CD8-positive, alpha-beta T cell (primary cell): ENCODE measurements at regions of chr17 and their contacts with region 1.

Region 1: DNA sequence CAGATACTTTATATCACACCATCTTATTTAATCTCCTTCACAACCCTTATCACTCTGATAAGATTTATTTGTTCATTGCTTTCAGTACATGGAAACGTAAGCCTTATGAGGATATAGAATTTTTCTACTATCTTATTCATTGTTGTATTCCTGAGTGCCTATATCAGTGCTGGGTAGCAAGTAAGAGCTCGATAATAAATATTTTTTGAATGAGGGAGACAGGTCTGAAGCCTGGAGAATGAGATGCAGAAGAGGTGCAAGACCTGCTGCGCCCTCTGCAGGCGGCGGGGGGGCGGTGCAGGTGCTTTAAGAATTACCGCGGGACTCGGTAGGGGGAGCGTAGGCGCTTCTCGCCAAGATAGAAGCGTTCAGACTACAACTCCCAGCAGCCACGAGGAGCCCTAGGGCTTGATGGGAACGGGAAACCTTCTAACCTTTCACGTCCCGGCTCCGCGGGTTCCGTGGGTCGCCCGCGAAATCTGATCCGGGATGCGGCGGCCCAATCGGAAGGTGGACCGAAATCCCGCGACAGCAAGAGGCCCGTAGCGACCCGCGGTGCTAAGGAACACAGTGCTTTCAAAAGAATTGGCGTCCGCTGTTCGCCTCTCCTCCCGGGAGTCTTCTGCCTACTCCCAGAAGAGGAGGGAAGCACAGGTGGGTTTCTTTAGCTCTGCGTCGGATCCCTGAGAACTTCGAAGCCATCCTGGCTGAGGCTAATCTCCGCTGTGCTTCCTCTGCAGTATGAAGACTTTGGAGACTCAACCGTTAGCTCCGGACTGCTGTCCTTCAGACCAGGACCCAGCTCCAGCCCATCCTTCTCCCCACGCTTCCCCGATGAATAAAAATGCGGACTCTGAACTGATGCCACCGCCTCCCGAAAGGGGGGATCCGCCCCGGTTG is at the start of gene WRAP53:
- DNase-seq: peak; percentile 93 to 97 (median 95)
- ATAC-seq: peak; percentile 77
- H3K4me3 ChIP-seq: peak within 1 kb of the TSS; percentile 81 to 92
- H3K4me3 Mint-ChIP-seq: peak within 1 kb of the TSS; percentile 97
- H3K27ac ChIP-seq: peak within 1 kb of the TSS; percentile 98 to 100
- H3K27ac Mint-ChIP-seq: peak within 1 kb of the TSS; percentile 100
- H3K4me1 ChIP-seq: peaks cover 32% of the 10 kb centered on the region
- H3K4me1 Mint-ChIP-seq: peaks cover 37% of the 10 kb centered on the region
- H3K27me3 ChIP-seq: no peaks in the 10 kb centered on the region
- H3K27me3 Mint-ChIP-seq: no peaks in the 10 kb centered on the region
- CTCF ChIP-seq: peak; percentile 98
- total RNA-seq, gene WRAP53: 5.2 to 6.6 TPM

Region 2: DNA sequence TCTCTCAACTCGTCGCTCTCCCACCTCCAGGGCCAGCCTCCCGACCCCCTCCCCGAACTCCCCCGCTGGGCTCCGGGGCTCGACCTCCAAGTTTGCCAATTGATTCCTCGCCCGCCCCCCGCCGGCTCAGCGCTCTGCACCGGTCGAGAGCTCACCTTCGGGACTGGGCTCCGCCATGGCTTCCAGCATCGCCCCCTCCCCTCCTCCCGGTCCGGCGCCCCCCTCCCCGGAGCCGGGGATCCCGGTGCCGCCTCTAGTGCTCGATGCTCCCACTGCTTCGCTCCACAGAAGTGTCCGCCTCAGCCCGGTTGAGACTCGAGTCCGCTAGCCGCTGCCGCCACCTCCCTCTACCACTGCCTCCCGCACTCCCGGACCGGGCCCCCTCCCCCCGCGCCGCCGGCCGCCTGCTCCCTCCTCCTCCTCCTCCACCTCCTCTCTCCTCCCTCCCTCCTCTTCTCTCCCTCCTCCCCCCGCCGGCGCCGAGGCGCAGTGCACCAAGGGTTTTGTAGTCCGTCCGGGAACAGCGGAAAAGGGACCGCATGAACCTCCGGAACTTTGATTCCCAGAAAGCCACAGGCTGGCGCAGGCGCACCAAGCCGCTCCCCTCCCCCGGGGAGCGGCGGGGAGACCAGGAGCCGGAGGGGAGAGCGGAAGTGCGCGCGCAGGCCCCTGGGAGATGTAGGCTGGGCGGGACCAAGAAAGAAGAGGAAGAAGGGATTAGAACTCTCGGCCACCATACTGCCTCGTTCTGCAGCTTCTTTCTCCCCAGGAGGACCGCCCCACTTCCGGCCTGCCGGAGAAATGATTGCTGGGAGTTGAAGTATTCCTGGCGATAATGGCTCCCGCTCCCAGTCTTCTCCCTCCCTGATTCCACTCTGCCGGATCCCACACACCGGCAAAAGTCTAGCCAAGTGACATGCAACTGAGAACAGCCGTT is 448.8 kb before region 1 on chr17 and contains the start of gene PHF23:
- CTCF ChIA-PET with region 1: no interaction called
- POLR2A ChIA-PET with region 1: interaction called, 4 read pairs
- intact Hi-C with region 1: loop called in 1 of 2 experiments (anchors 5 kb)
- DNase-seq: peak; percentile 93 to 99 (median 97)
- ATAC-seq: peak; percentile 64
- H3K4me3 ChIP-seq: peak within 1 kb of the TSS; percentile 87 to 90
- H3K4me3 Mint-ChIP-seq: peak within 1 kb of the TSS; percentile 98
- H3K27ac ChIP-seq: peak within 1 kb of the TSS; percentile 64 to 100
- H3K27ac Mint-ChIP-seq: peak within 1 kb of the TSS; percentile 90
- H3K4me1 ChIP-seq: peaks cover 37% of the 10 kb centered on the region
- H3K4me1 Mint-ChIP-seq: peaks cover 58% of the 10 kb centered on the region
- H3K27me3 ChIP-seq: no peaks in the 10 kb centered on the region
- H3K27me3 Mint-ChIP-seq: no peaks in the 10 kb centered on the region
- CTCF ChIP-seq: no peak
- total RNA-seq, gene PHF23: 2.8 to 3.1 TPM

Region 3: DNA sequence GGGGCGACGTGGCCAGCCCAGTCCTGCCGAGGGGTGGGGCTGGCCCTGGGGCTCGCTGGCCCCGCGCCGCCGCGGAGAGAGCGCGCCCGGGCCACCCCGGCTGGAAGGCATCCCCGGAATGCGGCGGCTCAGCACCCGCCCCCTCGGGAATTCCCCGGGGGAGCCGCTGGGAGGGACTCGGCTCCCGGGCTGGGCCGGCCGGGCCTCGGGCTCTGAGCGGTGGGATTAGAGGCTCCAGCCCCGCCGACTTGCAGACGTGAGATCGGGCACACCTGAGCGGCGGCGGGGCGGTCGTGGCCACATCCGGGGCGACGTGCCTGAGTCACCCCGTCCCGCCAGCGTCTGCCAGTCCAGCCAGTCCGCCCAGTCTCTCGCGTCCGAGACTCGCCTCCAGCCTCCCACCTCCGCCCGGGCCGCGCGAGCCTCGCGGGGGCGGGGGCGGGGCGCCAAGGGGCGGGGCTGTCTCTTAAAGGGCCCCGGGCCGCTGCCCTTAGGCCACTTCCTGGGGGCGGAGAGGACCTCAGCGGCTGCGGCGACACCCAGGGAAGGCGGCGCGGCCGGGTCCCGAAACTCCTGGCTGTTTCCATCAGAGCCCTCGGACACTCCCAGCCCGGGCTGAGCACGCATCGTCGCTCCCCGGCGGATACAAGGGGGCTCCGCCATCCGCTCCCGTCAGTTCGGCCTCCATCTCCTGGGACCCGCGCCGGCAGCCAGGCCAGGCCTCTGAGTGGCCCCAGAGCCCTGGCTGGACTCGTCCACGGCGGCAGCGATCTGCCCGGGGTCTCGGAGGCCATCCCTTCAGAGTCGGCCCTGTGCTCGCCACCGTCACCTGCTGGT is 336.3 kb before region 1 on chr17 and contains the start of gene KCTD11:
- CTCF ChIA-PET with region 1: interaction called, 4 read pairs
- POLR2A ChIA-PET with region 1: interaction called, 3 read pairs
- intact Hi-C with region 1: loop called (anchors 10 kb)
- DNase-seq: peak in 8 of 9 experiments; percentile 64 to 90 (median 80)
- ATAC-seq: peak; percentile 48
- H3K4me3 ChIP-seq: peak within 1 kb of the TSS; percentile 62 to 73
- H3K4me3 Mint-ChIP-seq: peak within 1 kb of the TSS; percentile 87
- H3K27ac ChIP-seq: peak within 1 kb of the TSS; percentile 53 to 87
- H3K27ac Mint-ChIP-seq: peak within 1 kb of the TSS; percentile 88
- H3K4me1 ChIP-seq: peaks cover 42% of the 10 kb centered on the region
- H3K4me1 Mint-ChIP-seq: peaks cover 38% of the 10 kb centered on the region
- H3K27me3 ChIP-seq: no peaks in the 10 kb centered on the region
- H3K27me3 Mint-ChIP-seq: no peaks in the 10 kb centered on the region
- CTCF ChIP-seq: peak; percentile 20
- total RNA-seq, gene KCTD11: 1.4 to 1.8 TPM

Region 4: DNA sequence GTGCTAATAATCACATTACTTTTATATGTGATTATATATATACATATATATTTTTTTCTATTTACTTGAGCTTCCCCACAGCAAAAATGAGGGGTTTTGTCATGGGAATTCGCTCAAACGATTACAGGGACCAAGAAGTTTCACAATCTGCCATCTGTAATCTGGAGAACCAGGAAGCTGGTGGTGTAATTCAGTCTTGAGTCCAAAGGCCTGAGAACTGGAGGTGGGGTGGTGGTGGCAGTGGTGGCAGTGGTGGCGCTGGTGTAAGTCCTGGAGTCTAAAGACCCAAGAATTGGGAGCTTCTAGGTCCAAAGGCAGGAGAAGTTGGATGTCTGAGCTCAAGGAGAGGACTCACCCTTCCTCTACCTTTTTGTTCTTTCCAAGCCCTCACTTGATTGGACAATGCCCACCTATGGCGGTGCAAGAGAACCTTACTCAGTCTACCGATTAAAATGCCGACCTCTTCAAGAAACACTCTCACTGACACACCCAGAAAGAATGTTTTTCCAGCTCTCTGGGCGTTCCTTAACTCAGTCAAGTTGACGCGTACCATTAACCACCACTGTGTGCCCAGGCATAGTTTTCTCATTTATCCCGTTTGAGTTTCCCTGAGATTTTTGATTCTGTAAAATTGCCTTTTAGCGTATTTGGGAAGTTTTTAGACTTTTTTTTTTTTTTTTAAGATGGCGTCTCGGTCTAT is 172.1 kb before region 1 on chr17:
- CTCF ChIA-PET with region 1: interaction called, 18 read pairs
- POLR2A ChIA-PET with region 1: interaction called, 5 read pairs
- intact Hi-C with region 1: loop called (anchors 1 to 2 kb)
- DNase-seq: no peak
- ATAC-seq: no peak
- H3K4me3 ChIP-seq: no peak overlapping the region
- H3K4me3 Mint-ChIP-seq: no peak overlapping the region
- H3K27ac ChIP-seq: no peak overlapping the region
- H3K27ac Mint-ChIP-seq: no peak overlapping the region
- H3K4me1 ChIP-seq: no peaks in the 10 kb centered on the region
- H3K4me1 Mint-ChIP-seq: peaks cover 2% of the 10 kb centered on the region
- H3K27me3 ChIP-seq: no peaks in the 10 kb centered on the region
- H3K27me3 Mint-ChIP-seq: no peaks in the 10 kb centered on the region
- CTCF ChIP-seq: no peak

Region 5: DNA sequence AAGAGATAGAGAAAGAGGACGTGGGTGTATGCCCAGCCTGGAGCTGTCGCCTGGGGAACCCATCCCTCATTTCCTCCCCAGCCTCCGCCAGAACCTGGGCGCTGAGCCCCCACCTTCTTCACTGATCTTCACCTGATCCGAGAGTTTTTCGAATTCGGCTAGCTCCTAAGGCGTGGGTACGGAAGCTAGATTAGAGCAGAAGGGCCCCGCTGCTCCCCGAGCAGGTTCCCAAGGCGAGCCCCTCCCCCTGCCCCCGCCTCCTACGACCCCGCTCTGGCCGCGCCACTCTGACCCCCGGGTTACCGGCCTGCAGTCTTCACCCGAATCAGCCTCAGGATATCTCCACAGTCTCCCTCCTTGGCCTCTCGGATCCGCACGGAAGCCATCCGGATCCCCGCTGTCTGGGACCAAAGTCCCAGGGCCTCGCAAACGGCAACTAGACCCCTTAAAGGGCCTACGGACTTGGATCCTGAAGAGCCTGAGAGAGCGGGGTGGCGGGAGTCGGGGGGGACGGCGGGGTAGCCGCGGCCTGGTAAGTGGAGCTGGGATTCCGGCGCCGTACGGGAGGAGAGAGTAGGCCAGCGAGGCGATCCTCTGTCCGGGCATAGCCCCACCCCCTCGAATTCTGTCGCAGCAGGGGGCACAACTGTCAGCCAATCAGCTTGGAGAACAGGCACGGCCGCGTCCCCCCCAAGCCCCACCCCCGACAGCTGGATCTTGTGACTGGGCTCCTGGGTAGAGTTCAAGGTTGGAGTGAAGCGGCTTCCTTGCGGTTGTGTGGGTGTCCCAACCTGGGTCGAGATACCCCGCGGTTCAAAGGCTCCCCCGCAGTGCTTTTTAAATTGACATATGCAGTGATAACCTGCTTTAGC is 60.7 kb before region 1 on chr17 and contains the start of gene SAT2:
- CTCF ChIA-PET with region 1: interaction called, 32 read pairs
- POLR2A ChIA-PET with region 1: interaction called, 58 read pairs
- intact Hi-C with region 1: loop called (anchors 1 kb)
- DNase-seq: peak; percentile 76 to 94 (median 86)
- ATAC-seq: peak; percentile 95
- H3K4me3 ChIP-seq: peak within 1 kb of the TSS; percentile 78 to 85
- H3K4me3 Mint-ChIP-seq: peak within 1 kb of the TSS; percentile 93
- H3K27ac ChIP-seq: peak within 1 kb of the TSS; percentile 74 to 78
- H3K27ac Mint-ChIP-seq: peak within 1 kb of the TSS; percentile 94
- H3K4me1 ChIP-seq: peaks cover 7% of the 10 kb centered on the region
- H3K4me1 Mint-ChIP-seq: peaks cover 16% of the 10 kb centered on the region
- H3K27me3 ChIP-seq: no peaks in the 10 kb centered on the region
- H3K27me3 Mint-ChIP-seq: no peaks in the 10 kb centered on the region
- CTCF ChIP-seq: no peak
- total RNA-seq, gene SAT2: 68.8 to 71.4 TPM

Region 6: GRCh38 chr17:7844292-7845154 is 156.4 kb after region 1 on chr17:
- CTCF ChIA-PET with region 1: no interaction called
- POLR2A ChIA-PET with region 1: interaction called, 4 read pairs
- intact Hi-C with region 1: loop called (anchors 2 to 5 kb)
- DNase-seq: peak; percentile 67 to 94 (median 79)
- ATAC-seq: peak; percentile 8
- H3K4me3 ChIP-seq: peak overlapping the region; percentile 94 to 98
- H3K4me3 Mint-ChIP-seq: peak overlapping the region; percentile 91
- H3K27ac ChIP-seq: peak overlapping the region; percentile 98 to 100
- H3K27ac Mint-ChIP-seq: peak overlapping the region; percentile 99
- H3K4me1 ChIP-seq: peaks cover 39% of the 10 kb centered on the region
- H3K4me1 Mint-ChIP-seq: peaks cover 33% of the 10 kb centered on the region
- H3K27me3 ChIP-seq: no peaks in the 10 kb centered on the region
- H3K27me3 Mint-ChIP-seq: no peaks in the 10 kb centered on the region
- CTCF ChIP-seq: no peak

Region 7: DNA sequence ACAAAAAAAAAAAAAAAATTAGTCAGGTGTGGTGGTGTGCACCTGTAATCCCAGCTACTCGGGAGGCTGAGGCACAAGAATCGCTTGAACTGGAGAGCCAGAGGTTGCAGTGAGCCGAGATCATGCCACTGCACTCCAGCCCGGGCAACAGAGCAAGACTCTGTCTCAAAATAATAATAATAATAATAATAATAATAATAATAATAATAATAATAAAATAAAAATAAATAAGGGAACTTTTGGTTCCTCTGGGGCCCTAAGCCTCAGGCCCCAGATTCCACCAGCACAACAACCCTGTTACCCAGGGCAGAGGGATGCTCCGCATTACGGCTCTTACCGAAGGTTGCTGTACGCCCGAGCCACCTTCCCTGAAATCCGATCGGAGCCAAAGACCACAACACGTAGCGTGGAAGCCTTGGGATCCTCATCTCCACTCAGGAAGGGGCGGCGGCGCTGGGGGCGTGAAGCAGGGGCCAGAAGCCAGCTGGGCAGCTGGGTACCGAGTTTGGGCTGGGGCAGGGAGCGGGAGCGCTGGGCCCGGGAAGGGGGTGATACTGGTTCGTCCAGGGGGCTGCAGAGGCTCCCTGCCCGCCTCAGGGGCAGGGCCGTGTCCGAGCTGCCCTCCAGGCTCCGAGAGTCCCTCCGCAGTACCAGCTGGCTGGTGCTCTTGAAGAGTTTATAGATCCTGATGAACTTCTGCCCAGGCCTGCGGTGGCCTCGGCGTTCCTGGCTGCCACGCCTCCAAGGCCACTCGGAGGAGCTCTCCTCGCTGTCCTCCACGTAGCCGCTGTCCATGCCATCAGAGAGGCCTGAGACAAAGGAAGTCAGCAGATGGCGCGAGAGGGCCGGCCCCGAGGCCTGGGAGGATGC is 1199.9 kb after region 1 on chr17:
- CTCF ChIA-PET with region 1: no interaction called
- POLR2A ChIA-PET with region 1: no interaction called
- intact Hi-C with region 1: loop called in 1 of 2 experiments (anchors 5 kb)
- DNase-seq: peak in 1 of 9 experiments; percentile 9
- ATAC-seq: no peak
- H3K4me3 ChIP-seq: no peak overlapping the region
- H3K4me3 Mint-ChIP-seq: no peak overlapping the region
- H3K27ac ChIP-seq: no peak overlapping the region
- H3K27ac Mint-ChIP-seq: no peak overlapping the region
- H3K4me1 ChIP-seq: no peaks in the 10 kb centered on the region
- H3K4me1 Mint-ChIP-seq: peaks cover 5% of the 10 kb centered on the region
- H3K27me3 ChIP-seq: no peaks in the 10 kb centered on the region
- H3K27me3 Mint-ChIP-seq: no peaks in the 10 kb centered on the region
- CTCF ChIP-seq: no peak